CD14-positive monocyte (primary cell): ENCODE measurements at regions of chr6 and their contacts with region 1.

Region 1: GRCh38 chr6:2245094-2245876 is at the start of gene GMDS:
- DNase-seq: peak; percentile 88 to 92 (median 88)
- H3K4me3 ChIP-seq: peak within 1 kb of the TSS; percentile 78 to 98 (median 92)
- H3K4me3 Mint-ChIP-seq: peak within 1 kb of the TSS; percentile 89 to 95
- H3K27ac ChIP-seq: peak within 1 kb of the TSS; percentile 79 to 98
- H3K27ac Mint-ChIP-seq: peak within 1 kb of the TSS; percentile 96 to 99 (median 97)
- H3K4me1 ChIP-seq: peaks cover 33 to 37% of the 10 kb centered on the region in 2 donors
- H3K4me1 Mint-ChIP-seq: peaks cover 42% of the 10 kb centered on the region
- H3K27me3 ChIP-seq: no peaks in the 10 kb centered on the region
- H3K27me3 Mint-ChIP-seq: peaks cover 3 to 6% (median 3%) of the 10 kb centered on the region in 3 donors
- CTCF ChIP-seq: no peak
- polyA plus RNA-seq, gene GMDS: 10.5 to 19.9 (median 17.6) TPM

Region 2: DNA sequence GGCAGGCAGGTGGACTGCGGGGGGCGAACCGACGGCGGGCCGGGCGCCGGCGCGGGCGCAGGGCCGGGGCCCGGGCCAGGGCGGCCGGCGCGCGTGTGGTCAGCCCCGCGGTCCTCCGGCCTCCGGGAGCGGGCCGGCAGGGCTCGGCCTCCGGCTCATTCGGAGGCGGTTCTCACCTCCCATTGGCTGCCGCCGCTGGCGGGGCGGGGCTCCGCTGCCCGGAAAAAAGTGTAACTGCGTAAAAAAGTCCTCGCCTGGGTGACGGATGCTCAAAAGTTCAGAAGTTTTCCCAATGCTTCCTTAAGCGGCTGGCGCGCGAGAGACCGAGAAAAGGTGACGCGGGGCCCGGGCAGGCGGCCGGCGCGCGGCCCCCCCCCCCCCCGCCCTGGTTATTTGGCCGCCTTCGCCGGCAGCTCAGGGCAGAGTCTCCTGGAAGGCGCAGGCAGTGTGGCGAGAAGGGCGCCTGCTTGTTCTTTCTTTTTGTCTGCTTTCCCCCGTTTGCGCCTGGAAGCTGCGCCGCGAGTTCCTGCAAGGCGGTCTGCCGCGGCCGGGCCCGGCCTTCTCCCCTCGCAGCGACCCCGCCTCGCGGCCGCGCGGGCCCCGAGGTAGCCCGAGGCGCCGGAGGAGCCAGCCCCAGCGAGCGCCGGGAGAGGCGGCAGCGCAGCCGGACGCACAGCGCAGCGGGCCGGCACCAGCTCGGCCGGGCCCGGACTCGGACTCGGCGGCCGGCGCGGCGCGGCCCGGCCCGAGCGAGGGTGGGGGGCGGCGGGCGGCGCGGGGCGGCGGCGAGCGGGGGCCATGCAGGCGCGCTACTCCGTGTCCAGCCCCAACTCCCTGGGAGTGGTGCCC is 635.4 kb before region 1 on chr6 and contains the start of gene FOXC1:
- intact Hi-C with region 1: loop called in 1 of 2 experiments (anchors 10 kb)
- DNase-seq: peak; percentile 55 to 73 (median 64)
- H3K4me3 ChIP-seq: peak within 1 kb of the TSS; percentile 16 to 68 (median 20)
- H3K4me3 Mint-ChIP-seq: peak within 1 kb of the TSS; percentile 80 to 90
- H3K27ac ChIP-seq: no peak within 1 kb of the TSS
- H3K27ac Mint-ChIP-seq: no peak within 1 kb of the TSS
- H3K4me1 ChIP-seq: peaks cover 54 to 72% of the 10 kb centered on the region in 2 donors
- H3K4me1 Mint-ChIP-seq: peaks cover 52% of the 10 kb centered on the region
- H3K27me3 ChIP-seq: peaks cover 72 to 79% of the 10 kb centered on the region in 2 donors
- H3K27me3 Mint-ChIP-seq: peaks cover 72 to 95% (median 73%) of the 10 kb centered on the region in 3 donors
- CTCF ChIP-seq: no peak
- polyA plus RNA-seq, gene FOXC1: 0.36 TPM in 1 of 3 donors, not detected in the others

Region 3: GRCh38 chr6:2542858-2543218 is 297.6 kb after region 1 on chr6:
- intact Hi-C with region 1: loop called in 1 of 2 experiments (anchors 10 kb)
- DNase-seq: peak; percentile 82 to 96 (median 95)
- H3K4me3 ChIP-seq: peak overlapping the region in 1 of 3 experiments; percentile 26
- H3K4me3 Mint-ChIP-seq: peak overlapping the region; percentile 14 to 67
- H3K27ac ChIP-seq: no peak overlapping the region
- H3K27ac Mint-ChIP-seq: peak overlapping the region; percentile 47 to 90 (median 83)
- H3K4me1 ChIP-seq: peaks cover 59 to 67% of the 10 kb centered on the region in 2 donors
- H3K4me1 Mint-ChIP-seq: peaks cover 61% of the 10 kb centered on the region
- H3K27me3 ChIP-seq: peaks cover 49 to 55% of the 10 kb centered on the region in 2 donors
- H3K27me3 Mint-ChIP-seq: peaks cover 52 to 69% (median 60%) of the 10 kb centered on the region in 3 donors
- CTCF ChIP-seq: no peak

Region 4: GRCh38 chr6:2634139-2634964 is 389.1 kb after region 1 on chr6:
- intact Hi-C with region 1: loop called in 1 of 2 experiments (anchors 10 kb)
- DNase-seq: peak; percentile 59 to 78 (median 64)
- H3K4me3 ChIP-seq: peak overlapping the region; percentile 18 to 77 (median 31)
- H3K4me3 Mint-ChIP-seq: peak overlapping the region; percentile 74 to 83
- H3K27ac ChIP-seq: no peak overlapping the region
- H3K27ac Mint-ChIP-seq: no peak overlapping the region
- H3K4me1 ChIP-seq: peaks cover 7 to 12% of the 10 kb centered on the region in 2 donors
- H3K4me1 Mint-ChIP-seq: peaks cover 6% of the 10 kb centered on the region
- H3K27me3 ChIP-seq: peaks cover 0 to 11% of the 10 kb centered on the region in 2 donors
- H3K27me3 Mint-ChIP-seq: peaks cover 18 to 22% (median 19%) of the 10 kb centered on the region in 3 donors
- CTCF ChIP-seq: peak; percentile 93

Region 5: DNA sequence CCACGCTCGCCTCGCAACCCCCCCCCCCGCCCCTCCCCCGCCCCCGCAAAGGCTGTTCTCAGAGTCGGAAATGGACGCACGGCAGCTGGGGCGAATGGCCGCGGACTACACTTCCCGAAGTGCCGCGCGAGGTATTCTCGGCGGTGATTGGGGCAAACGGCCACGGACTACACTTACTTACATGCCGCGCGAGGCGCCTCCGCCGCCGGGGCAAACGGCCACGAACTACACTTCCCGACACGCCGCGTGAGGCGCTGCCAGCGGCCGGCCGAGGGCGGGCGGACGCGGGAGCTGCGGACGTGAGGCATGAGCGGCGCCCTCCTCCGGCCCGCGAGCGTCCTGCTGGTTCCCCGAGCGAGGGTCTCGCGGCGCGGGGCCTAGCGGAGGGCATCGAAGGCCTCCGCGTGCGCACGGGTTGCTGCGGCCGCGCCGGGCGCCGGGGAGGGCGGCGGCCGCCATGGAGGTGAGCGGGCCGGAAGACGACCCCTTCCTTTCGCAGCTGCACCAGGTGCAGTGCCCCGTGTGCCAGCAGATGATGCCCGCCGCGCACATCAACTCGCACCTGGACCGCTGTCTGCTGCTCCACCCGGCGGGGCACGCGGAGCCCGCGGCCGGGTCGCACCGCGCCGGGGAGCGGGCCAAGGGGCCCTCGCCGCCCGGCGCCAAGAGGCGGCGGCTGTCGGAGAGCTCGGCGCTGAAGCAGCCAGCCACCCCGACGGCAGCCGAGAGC is 520.0 kb after region 1 on chr6 and contains the start of gene WRNIP1:
- intact Hi-C with region 1: loop called in 1 of 2 experiments (anchors 10 kb)
- DNase-seq: peak; percentile 98 to 99 (median 99)
- H3K4me3 ChIP-seq: peak within 1 kb of the TSS; percentile 82 to 98 (median 92)
- H3K4me3 Mint-ChIP-seq: peak within 1 kb of the TSS; percentile 91 to 94
- H3K27ac ChIP-seq: peak within 1 kb of the TSS; percentile 88 to 89
- H3K27ac Mint-ChIP-seq: peak within 1 kb of the TSS; percentile 98 to 99 (median 99)
- H3K4me1 ChIP-seq: peaks cover 39 to 58% of the 10 kb centered on the region in 2 donors
- H3K4me1 Mint-ChIP-seq: peaks cover 52% of the 10 kb centered on the region
- H3K27me3 ChIP-seq: no peaks in the 10 kb centered on the region
- H3K27me3 Mint-ChIP-seq: peaks cover 0 to 2% (median 0%) of the 10 kb centered on the region in 3 donors
- CTCF ChIP-seq: peak; percentile 86
- polyA plus RNA-seq, gene WRNIP1: 17.5 to 25.8 (median 17.8) TPM